ENCODE measurements at regions of chr6 and their contacts with region 1.

Region 1: DNA sequence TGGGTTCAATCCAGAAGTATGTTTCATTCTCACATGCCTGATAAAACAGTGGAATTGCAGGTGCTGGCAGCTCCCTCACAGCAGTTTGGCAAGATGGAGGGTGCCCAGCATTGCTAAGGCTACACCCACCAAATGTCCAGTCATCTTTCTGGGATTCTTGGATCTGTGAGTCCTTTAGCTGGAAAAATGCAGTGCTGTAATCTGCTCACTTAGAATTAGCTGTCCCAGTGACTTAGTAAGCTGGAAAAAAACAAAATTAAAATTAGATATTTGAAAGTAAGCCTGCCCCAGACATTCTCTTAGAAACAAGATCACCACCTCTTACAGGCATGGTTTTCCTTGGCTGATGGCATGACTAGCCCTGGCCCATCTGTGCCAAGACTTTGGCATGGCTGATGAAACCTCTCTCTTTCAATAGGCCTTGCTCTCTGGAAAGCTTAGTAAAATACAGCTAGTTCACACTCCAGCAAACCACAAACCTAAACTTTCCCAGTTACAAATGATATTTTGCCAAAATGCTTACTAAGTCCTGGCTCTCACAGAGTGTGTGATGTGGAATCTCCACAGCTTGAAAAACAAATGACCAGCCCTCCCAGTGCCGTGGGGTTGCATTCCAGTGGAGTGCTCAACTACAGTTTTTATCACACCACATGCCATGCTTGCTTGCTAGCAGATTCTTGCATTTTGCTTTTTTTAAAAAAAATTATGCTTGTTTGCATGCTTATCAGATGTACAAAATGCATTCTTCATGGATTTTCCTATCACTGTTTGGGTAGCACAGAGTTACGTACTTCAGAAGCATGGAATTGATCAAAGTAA is 261.5 kb downstream of the EYA4 start:
- DNase-seq: peak in 1 of 5 donors; percentile 34
- ATAC-seq: peak; percentile 53 to 77 (median 69)
- H3K4me3 ChIP-seq: no peak overlapping the region
- H3K27ac ChIP-seq: peak overlapping the region in 10 of 12 donors; percentile 11 to 64 (median 51)
- H3K4me1 ChIP-seq: peaks cover 0 to 53% (median 14%) of the 10 kb centered on the region in 12 donors
- H3K27me3 ChIP-seq: no peaks in the 10 kb centered on the region
- CTCF ChIP-seq: no peak
- POLR2A ChIP-seq: no peak

Region 2: DNA sequence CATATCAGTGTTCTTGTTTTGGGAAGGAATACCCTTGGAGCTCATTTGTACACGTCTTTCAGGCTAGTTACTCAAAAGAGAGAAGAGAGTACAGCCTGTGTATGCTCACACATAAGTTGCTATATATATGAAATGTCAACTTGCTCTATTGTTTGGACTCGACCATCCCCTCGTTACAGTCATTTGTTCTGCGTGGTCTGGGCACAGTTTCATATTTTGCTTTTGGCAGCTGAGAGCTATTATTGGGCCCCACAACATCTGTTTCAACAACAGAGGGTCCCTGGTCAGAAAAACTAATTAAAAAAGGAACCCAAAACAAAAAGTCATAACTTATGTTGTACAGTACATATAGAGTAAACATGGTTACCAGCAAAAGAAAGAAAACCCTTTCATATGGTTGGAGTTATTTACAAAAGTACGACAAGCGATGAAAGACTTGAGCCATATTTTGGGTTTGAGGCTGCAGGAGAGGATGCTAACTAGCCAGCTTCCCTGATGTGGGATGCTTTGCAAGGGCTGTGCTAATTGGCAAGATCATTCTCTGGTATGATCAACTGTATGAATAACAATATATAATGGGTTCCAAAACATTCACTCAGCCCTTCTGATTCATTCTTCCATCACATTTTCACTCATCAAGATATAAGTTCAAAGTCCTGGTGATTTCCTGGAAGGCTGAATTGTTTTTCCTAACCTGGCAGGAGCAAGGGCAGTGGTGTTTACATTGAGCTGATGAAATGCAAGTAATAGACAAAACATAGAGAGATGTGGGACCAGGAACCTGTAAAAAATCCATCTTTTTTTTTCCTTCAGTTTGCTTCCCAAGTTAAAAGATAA is 550.4 kb before region 1 on chr6:
- intact Hi-C with region 1: loop called in 1 of 10 experiments (anchors 10 kb)
- DNase-seq: no peak
- ATAC-seq: no peak
- H3K4me3 ChIP-seq: no peak overlapping the region
- H3K27ac ChIP-seq: no peak overlapping the region
- H3K4me1 ChIP-seq: no peaks in the 10 kb centered on the region
- H3K27me3 ChIP-seq: peaks cover 0 to 3% (median 0%) of the 10 kb centered on the region in 9 donors
- CTCF ChIP-seq: no peak
- POLR2A ChIP-seq: no peak

Region 3: GRCh38 chr6:133184798-133185372 is 317.8 kb before region 1 on chr6:
- intact Hi-C with region 1: loop called in 3 of 10 experiments (anchors 5 to 10 kb)
- DNase-seq: no peak
- ATAC-seq: no peak
- H3K4me3 ChIP-seq: no peak overlapping the region
- H3K27ac ChIP-seq: no peak overlapping the region
- H3K4me1 ChIP-seq: no peaks in the 10 kb centered on the region
- H3K27me3 ChIP-seq: no peaks in the 10 kb centered on the region
- CTCF ChIP-seq: peak; percentile 25 to 67 (median 52)
- POLR2A ChIP-seq: no peak

Region 4: DNA sequence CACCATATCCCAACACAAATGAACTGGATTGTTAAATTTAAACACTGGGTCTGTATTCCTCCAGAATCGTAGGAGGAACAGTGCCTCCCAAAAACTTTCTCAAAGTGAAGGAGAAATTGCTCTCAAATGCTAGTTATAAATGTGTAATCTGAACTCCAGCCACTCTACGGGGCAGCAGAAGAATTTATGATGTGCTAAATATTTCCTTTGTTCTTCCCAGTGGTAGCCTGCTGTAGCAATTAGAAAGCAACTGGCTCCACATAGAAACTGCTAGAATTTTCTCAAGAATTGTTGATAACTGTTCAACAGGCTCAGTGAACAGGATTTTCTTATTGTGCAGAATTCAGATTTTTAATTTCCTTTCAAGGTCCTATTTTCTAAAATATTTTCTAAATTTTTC is 311.3 kb before region 1 on chr6:
- intact Hi-C with region 1: loop called in 3 of 10 experiments (anchors 5 to 10 kb)
- DNase-seq: no peak
- ATAC-seq: no peak
- H3K4me3 ChIP-seq: no peak overlapping the region
- H3K27ac ChIP-seq: no peak overlapping the region
- H3K4me1 ChIP-seq: peaks cover 0 to 6% (median 0%) of the 10 kb centered on the region in 12 donors
- H3K27me3 ChIP-seq: no peaks in the 10 kb centered on the region
- CTCF ChIP-seq: no peak
- POLR2A ChIP-seq: no peak

Region 5: GRCh38 chr6:133241086-133241900 is 261.4 kb before region 1 on chr6 and contains the start of gene EYA4:
- intact Hi-C with region 1: loop called in 1 of 10 experiments (anchors 5 kb)
- DNase-seq: peak; percentile 23 to 73 (median 50)
- ATAC-seq: peak; percentile 56 to 75 (median 70)
- H3K4me3 ChIP-seq: peak within 1 kb of the TSS; percentile 38 to 73 (median 62)
- H3K27ac ChIP-seq: peak within 1 kb of the TSS; percentile 80 to 93 (median 82)
- H3K4me1 ChIP-seq: peaks cover 0 to 22% (median 0%) of the 10 kb centered on the region in 12 donors
- H3K27me3 ChIP-seq: peaks cover 0 to 66% (median 15%) of the 10 kb centered on the region in 9 donors
- CTCF ChIP-seq: no peak
- POLR2A ChIP-seq: no peak
- total RNA-seq, gene EYA4: 14.6 to 29.6 (median 22.6) TPM